Adrenal gland (tissue), 19 donors: ENCODE measurements at regions of chr16 and their contacts with region 1.

Region 1: GRCh38 chr16:87492721-87493607 is at the start of gene ZCCHC14:
- DNase-seq: peak; percentile 98 to 100 (median 99)
- H3K4me3 ChIP-seq: peak within 1 kb of the TSS in 2 of 4 donors; percentile 26 to 66
- H3K27ac ChIP-seq: peak within 1 kb of the TSS in 3 of 5 donors; percentile 55 to 96 (median 84)
- H3K4me1 ChIP-seq: peaks cover 30 to 34% of the 10 kb centered on the region in 2 donors
- H3K27me3 ChIP-seq: no peaks in the 10 kb centered on the region
- CTCF ChIP-seq: no peak
- POLR2A ChIP-seq: peak in 1 of 2 donors; percentile 88
- total RNA-seq, gene ZCCHC14: 17.3 to 49.8 (median 34.5) TPM

Region 2: GRCh38 chr16:87410968-87411367 is 82.0 kb before region 1 on chr16:
- intact Hi-C with region 1: loop called (anchors 5 to 10 kb)
- DNase-seq: peak in 1 of 7 donors; percentile 10
- H3K4me3 ChIP-seq: no peak overlapping the region
- H3K27ac ChIP-seq: no peak overlapping the region
- H3K4me1 ChIP-seq: peaks cover 0 to 4% of the 10 kb centered on the region in 2 donors
- H3K27me3 ChIP-seq: no peaks in the 10 kb centered on the region
- CTCF ChIP-seq: no peak
- POLR2A ChIP-seq: no peak

Region 3: DNA sequence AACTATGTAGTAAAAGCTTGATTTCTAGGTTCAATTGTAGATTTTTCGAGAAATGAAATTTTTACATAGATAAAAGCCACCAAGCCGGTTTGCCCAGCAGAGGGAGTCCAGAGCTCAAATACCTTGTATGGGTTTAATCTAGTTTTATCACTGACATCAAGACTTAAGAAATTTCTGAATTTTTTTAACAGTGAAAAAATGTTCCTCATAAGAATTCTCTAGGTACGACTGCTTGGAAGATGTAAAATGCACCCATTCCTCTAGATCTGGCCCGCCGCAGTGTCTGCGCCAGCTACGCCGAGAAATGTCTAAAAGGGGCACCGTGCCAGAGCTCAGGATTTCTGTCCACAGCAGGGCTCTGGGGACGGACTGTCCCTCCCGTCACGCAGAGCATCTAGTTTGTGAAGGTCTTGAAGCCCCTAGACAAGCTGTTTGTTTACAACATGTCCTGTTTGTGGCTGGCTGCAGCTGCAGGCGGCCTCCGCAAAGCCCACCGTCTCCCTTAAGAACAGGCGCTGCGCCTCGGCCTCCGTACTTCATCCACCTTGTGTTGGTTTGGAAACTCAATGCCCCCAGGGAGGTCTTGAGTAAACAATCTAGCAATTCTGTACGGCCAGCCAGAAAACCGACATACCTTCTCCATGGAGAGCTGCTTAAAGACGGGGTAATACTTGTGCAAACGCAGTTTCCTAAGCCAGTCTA is 76.0 kb before region 1 on chr16:
- intact Hi-C with region 1: loop called (anchors 5 to 10 kb)
- DNase-seq: peak in 6 of 7 donors; percentile 42 to 79 (median 62)
- H3K4me3 ChIP-seq: no peak overlapping the region
- H3K27ac ChIP-seq: no peak overlapping the region
- H3K4me1 ChIP-seq: no peaks in the 10 kb centered on the region
- H3K27me3 ChIP-seq: no peaks in the 10 kb centered on the region
- CTCF ChIP-seq: peak; percentile 48 to 74 (median 62)
- POLR2A ChIP-seq: no peak

Region 4: GRCh38 chr16:87586201-87586782 is 93.3 kb after region 1 on chr16:
- intact Hi-C with region 1: no loop called
- DNase-seq: peak in 1 of 7 donors; percentile 24
- H3K4me3 ChIP-seq: no peak overlapping the region
- H3K27ac ChIP-seq: peak overlapping the region in 1 of 5 donors; percentile 41
- H3K4me1 ChIP-seq: peaks cover 20 to 23% of the 10 kb centered on the region in 2 donors
- H3K27me3 ChIP-seq: peaks cover 6% of the 10 kb centered on the region
- CTCF ChIP-seq: no peak
- POLR2A ChIP-seq: no peak